ENCODE measurements at regions of chr10 and their contacts with region 1.

Region 1: DNA sequence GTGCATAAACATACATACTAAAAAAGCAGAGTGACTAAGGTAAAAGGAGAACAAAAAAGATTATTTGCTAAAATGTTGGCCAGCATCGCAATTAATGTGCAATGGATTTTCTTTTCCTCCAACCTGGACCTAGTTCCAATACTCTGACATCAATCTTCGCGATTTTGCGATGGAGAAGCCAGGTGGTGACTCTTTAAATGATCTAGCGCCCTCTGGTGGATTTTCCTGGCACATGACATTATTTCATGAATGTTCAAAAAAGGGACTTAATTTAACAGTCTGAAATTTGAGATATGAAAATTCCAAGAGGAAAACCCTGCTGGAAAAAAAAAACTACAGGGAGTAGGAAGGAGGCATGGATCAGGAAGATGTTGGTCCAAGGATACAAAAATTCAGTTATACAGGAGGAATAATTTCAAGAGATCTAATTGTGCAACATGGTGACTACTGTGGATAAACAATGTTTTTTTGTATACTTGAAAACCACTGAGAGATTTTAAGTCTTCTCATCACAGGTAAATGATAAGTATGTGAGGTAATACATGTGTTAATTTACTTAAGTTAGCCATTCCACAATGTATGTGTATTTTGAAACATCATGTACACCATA is 4.3 kb upstream of the KCNMA1 start:
- DNase-seq: peak; percentile 78
- H3K4me3 Mint-ChIP-seq: no peak overlapping the region
- H3K27ac Mint-ChIP-seq: no peak overlapping the region
- H3K4me1 Mint-ChIP-seq: peaks cover 4% of the 10 kb centered on the region
- H3K27me3 Mint-ChIP-seq: peaks cover 46% of the 10 kb centered on the region
- CTCF ChIP-seq: peak; percentile 64

Region 2: GRCh38 chr10:77173615-77174461 is 468.1 kb before region 1 on chr10:
- CTCF ChIA-PET with region 1: interaction called, 14 read pairs
- intact Hi-C with region 1: loop called (anchors 1 kb)
- DNase-seq: peak; percentile 83
- H3K4me3 Mint-ChIP-seq: no peak overlapping the region
- H3K27ac Mint-ChIP-seq: no peak overlapping the region
- H3K4me1 Mint-ChIP-seq: peaks cover 5% of the 10 kb centered on the region
- H3K27me3 Mint-ChIP-seq: no peaks in the 10 kb centered on the region
- CTCF ChIP-seq: peak; percentile 82

Region 3: GRCh38 chr10:77391605-77392235 is 250.2 kb before region 1 on chr10:
- CTCF ChIA-PET with region 1: interaction called, 3 read pairs
- intact Hi-C with region 1: loop called (anchors 2 kb)
- DNase-seq: peak; percentile 86
- H3K4me3 Mint-ChIP-seq: no peak overlapping the region
- H3K27ac Mint-ChIP-seq: no peak overlapping the region
- H3K4me1 Mint-ChIP-seq: peaks cover 9% of the 10 kb centered on the region
- H3K27me3 Mint-ChIP-seq: peaks cover 56% of the 10 kb centered on the region
- CTCF ChIP-seq: peak; percentile 35

Region 4: DNA sequence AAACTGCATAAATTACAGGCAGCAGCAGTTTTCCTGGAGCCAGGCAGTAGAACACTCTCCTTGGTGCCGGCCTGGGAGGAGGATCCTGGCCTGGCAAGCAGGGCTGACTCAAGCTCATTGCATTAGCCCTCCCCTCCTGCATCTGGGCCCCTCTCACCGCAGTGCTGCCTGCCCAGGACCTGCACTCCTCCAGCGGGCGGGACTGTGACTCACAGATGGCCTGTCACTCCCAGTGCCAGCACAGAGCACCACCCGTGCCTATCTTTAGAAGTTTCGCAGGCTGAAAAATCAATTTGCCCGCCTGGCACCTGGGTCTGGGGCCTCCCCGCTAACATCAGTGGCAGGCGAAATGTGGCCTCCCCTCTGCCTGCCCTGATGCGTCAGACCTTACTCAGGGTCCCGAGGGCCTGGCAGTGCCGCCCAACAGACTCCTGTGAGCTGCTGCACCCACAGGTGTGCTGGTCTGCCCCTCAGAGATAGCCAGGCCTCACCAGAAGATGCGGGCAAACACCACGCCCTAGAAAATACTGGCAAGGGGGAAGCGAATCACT is 128.0 kb before region 1 on chr10:
- CTCF ChIA-PET with region 1: no interaction called
- intact Hi-C with region 1: loop called (anchors 5 kb)
- DNase-seq: peak; percentile 91
- H3K4me3 Mint-ChIP-seq: peak overlapping the region; percentile 33
- H3K27ac Mint-ChIP-seq: no peak overlapping the region
- H3K4me1 Mint-ChIP-seq: peaks cover 30% of the 10 kb centered on the region
- H3K27me3 Mint-ChIP-seq: peaks cover 12% of the 10 kb centered on the region
- CTCF ChIP-seq: no peak

Region 5: DNA sequence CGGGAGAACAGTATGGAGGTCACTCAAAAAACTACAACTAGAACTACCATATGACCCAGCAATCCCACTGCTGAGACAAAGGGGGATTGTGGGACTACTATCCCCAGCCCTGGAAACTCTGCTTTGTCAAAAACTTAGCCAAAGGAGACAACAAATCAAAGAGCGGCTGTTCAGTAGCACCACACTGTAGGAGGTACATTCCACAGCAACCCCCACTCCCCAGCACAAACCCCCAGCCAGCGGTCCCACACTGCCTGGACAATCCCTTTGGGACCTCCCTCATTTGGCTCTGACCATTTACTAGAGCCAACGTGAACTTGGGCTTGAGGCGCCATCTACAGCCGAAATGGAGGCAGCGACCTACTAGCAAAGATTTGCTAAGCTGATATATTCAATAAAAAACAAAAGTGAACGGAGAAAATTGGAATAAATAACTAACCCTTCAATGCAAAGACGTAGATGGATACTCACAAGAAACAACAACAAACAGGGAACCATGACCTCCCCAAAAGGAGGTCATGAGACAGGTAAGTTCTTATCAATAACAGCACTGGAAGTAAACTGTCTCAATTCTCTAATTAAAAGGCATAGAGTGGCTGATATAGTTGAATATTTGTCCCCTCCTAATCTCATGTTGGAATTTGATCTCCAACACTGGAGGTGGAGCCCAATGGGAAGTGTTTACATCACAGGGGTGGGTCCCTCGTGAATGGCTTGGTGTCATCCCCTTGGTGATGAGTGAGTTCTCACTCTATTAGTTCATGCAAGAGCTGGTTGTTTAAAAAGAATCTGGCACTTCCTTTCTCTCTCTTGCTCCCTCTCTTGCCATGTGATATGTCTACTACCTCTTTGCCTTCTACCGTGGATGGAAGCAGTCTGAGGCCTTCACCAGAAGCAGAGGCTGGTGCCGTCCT is 114.7 kb after region 1 on chr10:
- CTCF ChIA-PET with region 1: no interaction called
- intact Hi-C with region 1: loop called (anchors 5 kb)
- DNase-seq: peak; percentile 64
- H3K4me3 Mint-ChIP-seq: no peak overlapping the region
- H3K27ac Mint-ChIP-seq: no peak overlapping the region
- H3K4me1 Mint-ChIP-seq: peaks cover 11% of the 10 kb centered on the region
- H3K27me3 Mint-ChIP-seq: no peaks in the 10 kb centered on the region
- CTCF ChIP-seq: peak; percentile 86

Region 6: GRCh38 chr10:78623578-78624215 is 981.8 kb after region 1 on chr10:
- CTCF ChIA-PET with region 1: no interaction called
- intact Hi-C with region 1: no loop called
- DNase-seq: peak; percentile 69
- H3K4me3 Mint-ChIP-seq: peak overlapping the region; percentile 2
- H3K27ac Mint-ChIP-seq: peak overlapping the region; percentile 46
- H3K4me1 Mint-ChIP-seq: peaks cover 52% of the 10 kb centered on the region
- H3K27me3 Mint-ChIP-seq: no peaks in the 10 kb centered on the region
- CTCF ChIP-seq: no peak

Measured in Calu3 (cell line).